Activated CD4-positive, alpha-beta T cell treated with anti-CD3 and anti-CD28 coated beads, Interleukin-2, amount 10 ng/mL, durations not matched to agents 24 days and 14 days (primary cell): ENCODE measurements at regions of chr18 and their contacts with region 1.

Region 1: DNA sequence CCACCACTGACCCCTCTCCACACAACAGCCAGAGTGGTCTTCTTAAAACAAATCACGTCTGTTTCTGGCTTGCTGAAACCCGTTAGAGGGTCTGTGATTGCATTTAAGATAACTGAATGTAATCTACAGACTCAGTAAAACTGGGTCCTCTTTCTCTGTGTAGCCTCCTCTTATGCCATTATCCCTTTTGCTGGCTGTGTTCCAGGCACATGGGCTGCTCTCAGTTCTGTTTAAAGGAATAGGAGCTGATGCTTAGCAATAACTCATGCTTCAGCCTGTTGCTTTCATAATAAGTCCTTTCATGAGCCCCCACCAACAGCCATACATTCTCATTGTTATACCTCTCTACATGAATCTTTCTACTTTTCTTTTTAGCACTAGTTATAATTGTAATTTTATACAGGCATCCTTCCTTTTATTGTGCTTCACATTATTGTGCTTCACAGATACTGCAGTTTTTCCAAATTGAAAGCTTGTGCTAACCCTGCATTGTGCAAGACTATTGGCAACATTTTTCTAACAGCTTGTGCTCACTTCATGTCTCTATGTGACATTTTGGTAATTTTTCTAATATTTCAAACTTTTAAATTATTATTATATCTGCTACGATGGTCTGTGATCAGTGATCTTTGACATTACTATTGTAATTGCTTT is 782.6 kb downstream of the MBD2 start:
- DNase-seq: no peak
- H3K4me3 Mint-ChIP-seq: no peak overlapping the region
- H3K27ac Mint-ChIP-seq: no peak overlapping the region
- H3K4me1 Mint-ChIP-seq: no peaks in the 10 kb centered on the region
- H3K27me3 Mint-ChIP-seq: no peaks in the 10 kb centered on the region

Region 2: GRCh38 chr18:53305461-53305860 is 136.4 kb before region 1 on chr18:
- intact Hi-C with region 1: no loop called
- DNase-seq: no peak
- H3K4me3 Mint-ChIP-seq: no peak overlapping the region
- H3K27ac Mint-ChIP-seq: no peak overlapping the region
- H3K4me1 Mint-ChIP-seq: no peaks in the 10 kb centered on the region
- H3K27me3 Mint-ChIP-seq: no peaks in the 10 kb centered on the region

Region 3: DNA sequence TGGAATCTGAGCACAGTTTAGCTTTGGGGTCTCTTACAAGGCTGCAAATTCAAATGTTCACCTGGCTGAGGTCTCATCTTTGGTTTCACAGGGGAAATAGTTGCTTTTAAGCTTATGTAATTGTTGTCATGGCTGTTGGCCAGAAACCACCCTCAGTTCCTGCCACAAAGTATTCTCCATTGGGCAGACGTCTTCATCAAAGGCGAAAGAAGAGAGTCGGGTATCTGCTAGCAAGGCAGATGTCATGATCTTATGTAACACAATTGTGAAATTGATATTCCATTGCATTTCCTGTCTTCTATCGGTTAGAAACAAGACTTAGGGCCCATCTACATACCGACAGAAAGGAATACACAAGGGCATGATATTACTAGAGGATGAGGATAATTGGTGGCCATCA is 33.6 kb before region 1 on chr18:
- intact Hi-C with region 1: loop called (anchors 5 kb)
- DNase-seq: no peak
- H3K4me3 Mint-ChIP-seq: no peak overlapping the region
- H3K27ac Mint-ChIP-seq: no peak overlapping the region
- H3K4me1 Mint-ChIP-seq: no peaks in the 10 kb centered on the region
- H3K27me3 Mint-ChIP-seq: no peaks in the 10 kb centered on the region